ENCODE measurements at regions of chr7 and their contacts with region 1.

Region 1: DNA sequence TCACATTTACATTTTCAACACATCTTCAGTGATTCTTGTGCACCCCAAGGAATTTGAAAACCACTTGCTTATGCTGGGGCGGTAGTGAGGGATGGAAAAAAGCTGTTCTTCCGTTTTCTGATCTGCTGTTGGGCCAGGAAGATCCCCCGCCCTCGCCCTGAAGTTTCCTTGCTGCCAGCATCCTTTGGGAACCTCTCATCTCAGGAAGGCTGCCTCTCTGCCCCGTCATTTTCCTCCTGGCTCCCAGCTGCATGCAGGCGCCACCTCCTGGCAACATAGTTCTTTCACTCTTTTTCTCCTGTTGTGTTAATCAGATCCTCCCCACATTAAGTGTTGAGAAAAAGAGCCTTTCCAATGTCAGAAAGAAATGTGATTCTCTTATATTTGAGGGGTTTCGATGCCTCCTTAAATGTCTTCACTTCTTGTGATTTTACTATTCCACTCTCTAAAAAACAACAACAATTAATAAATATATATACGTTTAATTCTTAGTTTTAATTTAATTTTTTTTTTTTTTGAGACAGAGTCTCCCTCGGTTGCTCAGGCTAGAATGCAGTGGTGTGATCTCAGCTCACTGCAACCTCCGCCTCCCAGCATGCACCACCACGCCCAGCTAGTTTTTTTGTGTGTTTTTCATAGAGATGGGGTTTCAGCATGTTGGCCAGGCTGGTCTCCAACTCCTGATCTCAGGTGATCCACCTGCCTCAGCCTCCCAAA is 122.9 kb downstream of the RALA start:
- DNase-seq: peak; percentile 61 to 85
- ATAC-seq: peak; percentile 64 to 94 (median 84)
- H3K4me3 ChIP-seq: no peak overlapping the region
- H3K27ac ChIP-seq: no peak overlapping the region
- H3K4me1 ChIP-seq: peaks cover 0 to 15% (median 0%) of the 10 kb centered on the region in 9 donors
- H3K27me3 ChIP-seq: no peaks in the 10 kb centered on the region
- CTCF ChIP-seq: peak; percentile 58 to 89 (median 82)

Region 2: DNA sequence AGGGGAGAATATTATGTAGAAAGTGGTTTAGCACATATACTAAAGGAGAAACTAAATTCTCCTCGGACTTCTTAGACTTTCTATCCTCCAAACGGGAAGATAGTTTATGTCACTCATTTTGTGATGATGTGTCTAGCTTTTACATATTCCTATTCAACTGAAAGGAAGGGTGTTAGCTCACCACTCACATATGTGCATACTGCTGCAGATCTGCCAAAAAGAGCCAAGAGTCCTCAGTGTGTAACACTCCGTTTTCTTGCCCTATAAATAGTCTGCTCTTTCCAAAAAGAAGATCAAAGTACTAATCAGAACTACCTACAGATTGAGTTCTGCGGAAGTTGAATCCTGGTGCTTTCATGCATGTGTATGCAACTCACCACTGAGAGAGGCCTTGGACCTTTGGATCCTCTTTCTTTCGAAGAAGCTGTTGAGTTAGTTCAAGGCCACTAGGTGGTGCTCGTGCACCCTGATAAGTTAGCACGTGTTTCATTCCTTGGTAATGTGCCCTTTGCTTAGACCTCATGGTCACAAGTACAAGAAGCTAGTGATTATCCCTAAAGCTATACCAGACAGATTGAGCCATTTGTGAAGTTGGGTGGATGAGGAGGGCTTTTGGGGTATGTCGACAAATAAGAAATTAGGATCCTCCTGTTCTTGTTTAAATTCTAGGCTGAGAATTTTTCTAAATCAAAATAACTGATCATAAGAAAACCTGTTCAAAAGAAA is 165.9 kb before region 1 on chr7:
- intact Hi-C with region 1: loop called (anchors 1 to 5 kb)
- DNase-seq: peak; percentile 47 to 81
- ATAC-seq: peak; percentile 87 to 94 (median 90)
- H3K4me3 ChIP-seq: no peak overlapping the region
- H3K27ac ChIP-seq: no peak overlapping the region
- H3K4me1 ChIP-seq: peaks cover 0 to 4% (median 0%) of the 10 kb centered on the region in 9 donors
- H3K27me3 ChIP-seq: no peaks in the 10 kb centered on the region
- CTCF ChIP-seq: peak; percentile 75 to 91 (median 83)

Region 3: DNA sequence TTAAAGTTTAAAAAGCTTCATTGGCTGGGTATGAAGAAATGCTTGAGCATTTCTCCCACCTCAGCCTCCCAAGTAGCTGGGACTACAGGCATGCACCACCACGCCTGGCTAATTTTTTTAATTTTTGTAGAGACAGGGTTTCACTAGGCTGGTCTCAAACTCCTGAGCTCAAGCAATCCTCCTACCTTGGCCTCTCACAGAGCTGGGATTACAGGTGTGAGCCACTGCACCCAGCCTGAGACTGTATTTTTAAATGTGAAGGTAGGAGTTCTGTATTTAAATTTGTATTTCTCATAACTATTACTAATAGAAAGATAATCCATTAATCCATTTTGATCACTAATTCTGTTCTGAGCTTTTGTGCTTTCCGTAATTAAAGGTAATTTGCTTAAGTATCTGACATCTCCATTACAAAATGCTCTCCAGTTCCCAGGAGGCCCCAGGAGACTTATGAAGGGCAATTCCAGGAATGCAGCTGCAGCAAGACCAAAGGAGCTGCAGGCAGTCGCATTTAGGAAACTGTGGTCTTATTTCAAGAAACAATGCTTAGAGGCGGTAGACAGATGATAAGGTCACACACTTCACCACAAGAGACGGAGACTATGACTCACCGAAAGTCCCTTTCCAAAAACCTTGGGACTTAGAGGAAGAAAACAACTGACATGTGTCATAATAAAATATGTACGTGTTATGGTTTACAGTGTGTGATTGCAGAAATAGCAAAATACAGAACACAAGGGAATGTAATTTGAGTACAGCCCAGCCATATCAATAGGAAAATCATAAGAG is 156.7 kb before region 1 on chr7:
- intact Hi-C with region 1: loop called in 2 of 10 experiments (anchors 5 kb)
- DNase-seq: peak in 1 of 2 donors; percentile 16
- ATAC-seq: peak; percentile 38 to 90 (median 82)
- H3K4me3 ChIP-seq: no peak overlapping the region
- H3K27ac ChIP-seq: peak overlapping the region in 4 of 10 donors; percentile 8 to 61 (median 30)
- H3K4me1 ChIP-seq: peaks cover 0 to 34% (median 12%) of the 10 kb centered on the region in 9 donors
- H3K27me3 ChIP-seq: no peaks in the 10 kb centered on the region
- CTCF ChIP-seq: no peak

Measured in heart right ventricle (tissue), 16 donors.